ENCODE measurements at regions of chr16 and their contacts with region 1.

Region 1: DNA sequence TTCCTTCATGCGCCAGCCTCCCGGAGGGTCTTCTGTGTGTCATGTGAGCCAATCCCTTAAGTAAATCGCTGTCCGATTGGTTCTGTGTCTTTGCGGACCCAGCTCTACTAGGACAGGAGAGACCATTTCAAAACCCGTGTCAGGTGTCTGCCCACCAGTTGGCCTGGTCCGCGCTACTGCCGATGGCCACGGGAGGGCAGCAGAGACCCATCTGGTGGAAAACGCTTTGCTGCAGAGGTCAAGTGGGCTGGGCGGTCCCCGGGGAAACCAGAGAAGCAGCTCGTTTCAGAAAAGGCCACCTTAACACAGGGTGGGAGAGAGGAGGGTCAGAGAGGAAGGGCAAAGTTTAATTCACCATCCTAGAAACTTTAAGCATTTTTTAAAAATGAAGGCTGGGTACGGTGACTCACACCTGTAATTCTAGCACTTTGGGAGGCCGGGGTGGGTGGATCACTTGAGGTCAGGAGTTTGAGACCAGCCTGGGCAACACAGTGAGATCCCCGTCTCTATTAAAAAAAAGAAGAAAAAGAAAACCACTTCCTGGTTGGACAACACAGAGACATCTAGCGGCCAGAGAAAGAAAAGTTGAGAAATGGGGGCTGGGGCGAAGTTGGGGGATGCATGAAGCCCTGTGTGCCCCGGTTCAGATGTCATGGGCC is 2.8 kb upstream of the CIBAR2 start:
- DNase-seq: peak; percentile 64
- ATAC-seq: peak; percentile 91
- H3K4me3 ChIP-seq: peak overlapping the region; percentile 13 to 41; a peak in 3 of 4 replicates
- H3K27ac ChIP-seq: peak overlapping the region; percentile 76
- H3K4me1 ChIP-seq: no peaks in the 10 kb centered on the region
- H3K27me3 ChIP-seq: no peaks in the 10 kb centered on the region
- CTCF ChIP-seq: peak; percentile 93

Region 2: DNA sequence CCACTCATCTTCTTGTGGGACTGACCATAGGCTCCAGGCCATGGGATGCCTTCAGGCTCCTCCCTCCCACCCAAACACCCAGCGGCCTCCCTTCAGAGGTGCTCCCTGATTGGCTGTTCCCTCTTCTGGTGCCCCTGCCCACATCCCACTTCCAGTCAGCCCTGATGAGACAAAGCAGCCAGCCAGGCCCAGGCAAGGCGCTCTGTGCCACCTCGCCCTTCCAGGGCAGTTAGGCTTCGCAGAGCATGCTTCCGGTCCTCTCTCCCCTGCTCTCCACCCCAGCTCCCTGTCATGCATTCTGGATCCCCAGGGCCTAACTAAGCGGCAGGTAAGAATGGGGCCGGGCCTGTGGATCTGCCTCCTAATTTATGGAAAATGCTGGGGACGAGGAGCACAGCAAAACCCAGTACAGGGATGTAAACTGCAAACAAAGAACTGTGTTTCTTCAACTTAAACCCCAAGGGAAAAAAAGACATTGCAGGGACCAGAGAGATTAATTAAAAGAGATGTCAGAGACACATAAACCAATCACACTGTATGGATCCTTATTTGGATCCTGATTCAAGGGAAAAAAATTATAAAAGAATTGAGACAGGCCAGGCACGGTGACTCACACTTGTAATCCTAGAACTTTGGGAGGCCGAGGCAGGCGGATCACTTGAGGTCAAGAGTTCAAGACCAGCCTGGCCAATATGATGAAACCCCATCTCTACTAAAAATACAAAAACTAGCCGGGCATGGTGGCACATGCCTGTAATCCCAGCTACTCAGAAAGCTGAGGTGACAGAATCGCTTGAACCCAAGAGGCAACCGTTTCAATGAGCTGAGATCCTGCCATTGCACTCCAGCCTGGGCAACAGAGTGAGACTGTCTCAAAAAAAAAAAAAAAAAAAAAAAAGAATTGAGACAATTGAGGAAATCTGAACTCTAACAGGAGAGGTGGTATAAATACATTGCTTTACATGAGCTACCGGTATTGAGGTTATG is 129.7 kb before region 1 on chr16:
- CTCF ChIA-PET with region 1: no interaction called
- POLR2A ChIA-PET with region 1: no interaction called
- in situ Hi-C with region 1: no loop called
- intact Hi-C with region 1: no loop called
- DNase-seq: no peak
- ATAC-seq: no peak
- H3K4me3 ChIP-seq: no peak overlapping the region
- H3K27ac ChIP-seq: peak overlapping the region; percentile 29; the same call in 1 of the 2 replicates
- H3K4me1 ChIP-seq: peaks cover 7% of the 10 kb centered on the region
- H3K27me3 ChIP-seq: no peaks in the 10 kb centered on the region
- CTCF ChIP-seq: no peak

Region 3: DNA sequence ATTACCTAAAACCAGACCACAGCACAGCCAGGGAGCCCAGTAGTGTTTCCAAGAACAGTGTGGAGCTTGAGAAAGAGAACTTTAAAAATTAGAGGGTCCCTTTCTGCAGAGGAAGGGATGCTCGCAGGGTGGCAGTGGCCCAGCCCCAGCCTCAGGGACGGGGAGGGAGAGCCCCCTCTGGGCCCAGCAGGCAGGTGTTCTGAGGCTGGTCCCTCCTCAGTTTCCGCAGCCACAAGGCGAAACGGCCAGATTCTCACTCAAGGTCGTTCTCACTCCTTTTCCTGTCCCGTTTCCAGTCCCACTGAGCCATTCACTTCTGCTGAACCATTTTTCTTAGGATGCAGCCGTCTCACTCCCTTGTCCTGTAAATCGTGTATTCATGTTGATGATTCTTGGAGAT is 22.7 kb before region 1 on chr16:
- CTCF ChIA-PET with region 1: interaction called, 11 read pairs
- POLR2A ChIA-PET with region 1: no interaction called
- in situ Hi-C with region 1: no loop called
- intact Hi-C with region 1: no loop called
- DNase-seq: no peak
- ATAC-seq: no peak
- H3K4me3 ChIP-seq: no peak overlapping the region
- H3K27ac ChIP-seq: no peak overlapping the region
- H3K4me1 ChIP-seq: no peaks in the 10 kb centered on the region
- H3K27me3 ChIP-seq: no peaks in the 10 kb centered on the region
- CTCF ChIP-seq: no peak

Region 4: DNA sequence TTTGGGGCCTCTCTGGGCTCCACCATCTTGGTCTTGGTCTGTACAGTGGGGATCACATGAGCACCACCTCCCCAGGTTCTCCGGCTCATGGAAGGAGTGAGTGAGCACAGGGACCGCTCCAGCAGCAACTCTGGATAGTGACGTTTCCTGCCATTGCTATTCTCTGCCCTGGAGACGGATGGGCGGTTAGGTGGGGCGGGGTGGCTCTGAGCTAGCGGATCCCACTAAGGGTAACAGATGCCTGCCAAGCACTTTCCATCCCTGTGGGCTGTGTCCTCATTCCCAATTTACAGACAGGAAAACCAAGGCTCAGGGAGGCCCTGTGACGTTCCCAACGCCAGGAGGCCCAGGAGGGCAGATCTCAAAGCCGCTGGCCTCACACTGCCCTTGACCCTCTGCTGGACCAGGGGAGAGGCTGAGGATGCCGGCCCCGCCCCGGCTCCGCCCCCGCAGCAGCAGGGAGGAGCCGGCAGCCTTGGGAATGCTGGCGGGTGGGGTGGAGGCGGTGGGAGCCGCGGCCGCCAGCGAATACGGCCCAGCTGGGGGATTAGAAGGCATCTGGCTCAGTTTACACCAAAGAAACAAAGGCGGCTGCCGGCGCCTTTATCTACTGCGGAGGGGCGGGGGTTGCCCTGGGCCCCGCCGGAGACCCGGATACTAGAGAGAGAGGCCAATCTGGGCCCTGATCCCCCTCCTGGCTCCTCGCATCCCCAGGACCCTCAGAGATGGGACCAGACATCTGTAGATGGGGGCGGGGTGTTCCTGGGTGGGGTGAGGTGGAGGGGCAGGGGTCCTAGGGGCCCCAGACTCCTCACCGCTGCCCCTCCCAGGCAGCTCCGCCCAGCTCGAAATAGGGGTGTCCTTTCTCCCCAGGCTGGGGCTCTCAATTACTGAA is 119.5 kb after region 1 on chr16:
- CTCF ChIA-PET with region 1: no interaction called
- POLR2A ChIA-PET with region 1: no interaction called
- in situ Hi-C with region 1: no loop called
- intact Hi-C with region 1: loop called (anchors 10 kb)
- DNase-seq: no peak
- ATAC-seq: peak; percentile 79
- H3K4me3 ChIP-seq: peak overlapping the region; percentile 43 to 46
- H3K27ac ChIP-seq: 0 out of 2 replicates have a peak overlapping the region, but pooled peaks have one; percentile 23
- H3K4me1 ChIP-seq: peaks cover 4% of the 10 kb centered on the region; the same call in 1 of the 2 replicates
- H3K27me3 ChIP-seq: no peaks in the 10 kb centered on the region
- CTCF ChIP-seq: no peak